Pancreas (tissue), 10 donors: ENCODE measurements at regions of chr4 and their contacts with region 1.

Region 1: DNA sequence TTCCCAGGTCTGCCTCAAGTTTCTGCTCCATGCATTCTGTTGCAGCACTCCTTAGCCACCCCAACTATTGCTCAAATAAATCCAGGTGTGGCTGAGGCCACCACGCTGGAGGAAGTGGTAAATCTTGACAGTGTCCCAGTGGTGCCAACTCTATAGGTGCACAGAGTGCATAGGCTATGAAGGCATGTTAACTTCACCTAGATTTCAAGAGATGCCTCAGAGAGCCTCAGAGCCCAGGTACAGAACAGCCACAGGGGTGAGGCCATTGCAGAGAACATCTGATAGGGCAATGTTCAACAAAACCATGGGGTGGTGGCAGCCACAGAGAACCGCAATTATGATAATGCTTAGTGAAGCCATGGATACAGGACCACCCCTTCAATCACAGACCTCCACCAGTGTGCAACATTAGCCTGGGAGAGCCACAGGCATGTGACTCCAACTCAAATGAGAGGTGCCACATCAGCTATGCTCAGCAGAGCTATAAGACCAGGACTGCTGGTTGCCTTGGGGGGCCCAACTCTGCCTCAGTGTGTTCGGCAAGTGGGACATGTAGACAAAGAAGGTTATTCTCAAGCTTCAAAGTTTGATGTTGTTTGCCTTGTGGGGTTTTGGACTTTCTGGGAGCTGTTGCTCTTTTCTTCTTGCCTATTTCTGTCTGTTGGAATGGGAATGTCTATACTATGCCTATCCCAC is 468.7 kb downstream of the ANKRD50 start:
- DNase-seq: no peak
- ATAC-seq: no peak
- H3K4me3 ChIP-seq: no peak overlapping the region
- H3K27ac ChIP-seq: no peak overlapping the region
- H3K4me1 ChIP-seq: no peaks in the 10 kb centered on the region
- H3K27me3 ChIP-seq: no peaks in the 10 kb centered on the region
- CTCF ChIP-seq: no peak

Region 2: GRCh38 chr4:123096038-123096437 is 1147.8 kb before region 1 on chr4:
- intact Hi-C with region 1: loop called in 1 of 3 experiments (anchors 10 kb)
- DNase-seq: no peak
- ATAC-seq: no peak
- H3K4me3 ChIP-seq: no peak overlapping the region
- H3K27ac ChIP-seq: no peak overlapping the region
- H3K4me1 ChIP-seq: no peaks in the 10 kb centered on the region
- H3K27me3 ChIP-seq: no peaks in the 10 kb centered on the region
- CTCF ChIP-seq: no peak

Region 3: GRCh38 chr4:124414276-124415040 is 170.6 kb after region 1 on chr4:
- intact Hi-C with region 1: no loop called
- DNase-seq: no peak
- ATAC-seq: no peak
- H3K4me3 ChIP-seq: no peak overlapping the region
- H3K27ac ChIP-seq: no peak overlapping the region
- H3K4me1 ChIP-seq: no peaks in the 10 kb centered on the region
- H3K27me3 ChIP-seq: no peaks in the 10 kb centered on the region
- CTCF ChIP-seq: no peak

Region 4: GRCh38 chr4:124631760-124632159 is 387.9 kb after region 1 on chr4:
- intact Hi-C with region 1: no loop called
- DNase-seq: peak in 4 of 6 donors; percentile 52 to 82 (median 72)
- ATAC-seq: peak; percentile 95 to 99 (median 98)
- H3K4me3 ChIP-seq: no peak overlapping the region
- H3K27ac ChIP-seq: peak overlapping the region in 2 of 4 donors; percentile 11 to 17
- H3K4me1 ChIP-seq: peaks cover 0 to 19% (median 7%) of the 10 kb centered on the region in 3 donors
- H3K27me3 ChIP-seq: no peaks in the 10 kb centered on the region
- CTCF ChIP-seq: no peak

Region 5: GRCh38 chr4:124722071-124722470 is 478.3 kb after region 1 on chr4:
- intact Hi-C with region 1: no loop called
- DNase-seq: no peak
- ATAC-seq: no peak
- H3K4me3 ChIP-seq: no peak overlapping the region
- H3K27ac ChIP-seq: no peak overlapping the region
- H3K4me1 ChIP-seq: no peaks in the 10 kb centered on the region
- H3K27me3 ChIP-seq: no peaks in the 10 kb centered on the region
- CTCF ChIP-seq: no peak